Right cardiac atrium (tissue), 5 donors: ENCODE measurements at regions of chr20 and their contacts with region 1.

Region 1: GRCh38 chr20:44388466-44389023 is 33.0 kb downstream of the HNF4A start:
- DNase-seq: peak; percentile 73 to 86 (median 83)
- ATAC-seq: peak; percentile 76 to 88
- H3K4me3 ChIP-seq: no peak overlapping the region
- H3K27ac ChIP-seq: no peak overlapping the region
- H3K4me1 ChIP-seq: no peaks in the 10 kb centered on the region
- H3K27me3 ChIP-seq: no peaks in the 10 kb centered on the region

Region 2: GRCh38 chr20:44210422-44211176 is 177.9 kb before region 1 on chr20 and contains the start of gene OSER1:
- intact Hi-C with region 1: loop called in 3 of 4 experiments (anchors 5 to 10 kb)
- DNase-seq: peak; percentile 95 to 99 (median 98)
- ATAC-seq: peak; percentile 94 to 95
- H3K4me3 ChIP-seq: peak within 1 kb of the TSS; percentile 94
- H3K27ac ChIP-seq: peak within 1 kb of the TSS; percentile 94
- H3K4me1 ChIP-seq: peaks cover 2% of the 10 kb centered on the region
- H3K27me3 ChIP-seq: no peaks in the 10 kb centered on the region
- total RNA-seq, gene OSER1: 22.6 to 44.5 (median 36.1) TPM

Region 3: DNA sequence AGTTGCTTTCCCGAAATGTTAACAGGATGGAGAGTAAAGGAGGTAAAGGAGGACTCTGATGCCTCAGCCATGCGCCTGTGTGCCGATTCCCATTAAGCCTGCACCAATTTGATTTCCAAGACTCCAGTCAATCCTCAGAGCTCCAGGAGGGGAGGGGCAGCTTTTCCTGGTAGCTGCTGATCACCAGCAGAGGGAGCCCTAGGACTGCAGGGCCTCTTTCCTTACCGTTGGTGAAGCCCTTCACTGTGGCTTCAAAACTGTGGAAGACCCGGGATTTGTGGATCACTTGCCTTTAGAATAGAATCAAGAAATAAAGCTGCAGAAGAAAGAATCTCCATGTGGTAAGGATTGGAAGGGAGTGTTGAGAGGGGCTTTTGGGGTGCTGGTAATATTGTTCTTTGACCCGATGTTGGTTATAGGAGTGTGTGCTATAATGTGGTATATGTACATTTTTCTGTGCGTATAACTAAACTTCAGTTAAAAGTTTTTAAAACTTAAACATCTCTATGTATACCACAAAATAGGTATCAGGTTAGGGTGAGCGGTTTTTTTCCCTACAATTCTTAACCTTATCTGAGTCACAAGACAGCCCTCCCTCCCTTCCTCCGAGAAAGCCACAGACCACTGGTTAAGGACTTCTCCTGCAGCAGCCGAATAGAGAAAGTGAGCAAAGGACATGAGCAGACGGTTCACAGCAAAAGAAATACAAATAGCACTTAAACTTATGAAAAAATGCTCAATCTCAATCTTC is 171.0 kb before region 1 on chr20:
- intact Hi-C with region 1: loop called in 3 of 4 experiments (anchors 5 to 10 kb)
- DNase-seq: peak; percentile 59 to 82 (median 77)
- ATAC-seq: peak; percentile 66 to 77
- H3K4me3 ChIP-seq: peak overlapping the region; percentile 40
- H3K27ac ChIP-seq: no peak overlapping the region
- H3K4me1 ChIP-seq: peaks cover 6% of the 10 kb centered on the region
- H3K27me3 ChIP-seq: no peaks in the 10 kb centered on the region

Region 4: GRCh38 chr20:44460795-44461141 is 72.2 kb after region 1 on chr20:
- intact Hi-C with region 1: loop called in 1 of 4 experiments (anchors 10 kb)
- DNase-seq: no peak
- ATAC-seq: no peak
- H3K4me3 ChIP-seq: no peak overlapping the region
- H3K27ac ChIP-seq: no peak overlapping the region
- H3K4me1 ChIP-seq: no peaks in the 10 kb centered on the region
- H3K27me3 ChIP-seq: no peaks in the 10 kb centered on the region

Region 5: GRCh38 chr20:44683263-44684046 is 294.9 kb after region 1 on chr20:
- intact Hi-C with region 1: loop called in 2 of 4 experiments (anchors 5 to 10 kb)
- DNase-seq: peak in 1 of 3 donors; percentile 70
- ATAC-seq: peak; percentile 45 to 71
- H3K4me3 ChIP-seq: no peak overlapping the region
- H3K27ac ChIP-seq: no peak overlapping the region
- H3K4me1 ChIP-seq: no peaks in the 10 kb centered on the region
- H3K27me3 ChIP-seq: no peaks in the 10 kb centered on the region

Region 6: DNA sequence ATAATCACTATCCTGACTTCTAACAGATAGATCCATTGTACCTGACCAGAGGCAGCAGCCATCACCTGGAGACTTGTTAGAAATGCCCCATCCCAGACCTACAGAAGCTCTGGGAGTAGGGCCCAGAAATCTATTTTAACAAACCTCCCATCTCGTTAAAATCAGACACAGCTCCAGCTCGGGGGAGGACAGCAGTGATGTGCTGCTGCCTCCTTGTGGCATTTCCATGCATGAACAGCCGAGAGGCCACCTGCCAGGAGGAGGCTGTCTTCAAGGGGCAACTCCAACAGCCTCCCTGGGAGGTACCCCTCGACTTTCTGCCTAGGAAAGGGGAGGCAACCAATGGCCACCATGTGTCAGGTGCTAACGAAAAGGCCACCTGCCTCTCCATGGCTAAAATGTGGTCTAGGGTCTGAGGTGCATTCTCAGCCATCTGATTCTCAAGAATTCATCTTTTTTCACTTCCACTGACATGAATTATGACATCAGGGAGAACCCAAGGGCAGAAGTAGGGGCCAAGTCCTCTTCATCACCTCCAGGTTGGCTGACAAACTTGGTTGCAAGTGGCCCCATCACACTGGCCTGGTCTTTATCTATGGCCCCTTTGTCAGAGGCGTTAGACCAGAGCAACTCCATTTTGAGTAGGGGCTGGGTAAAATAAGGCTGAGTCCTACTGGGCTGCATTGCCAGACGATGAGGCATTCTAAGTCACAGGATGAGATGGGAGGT is 345.0 kb after region 1 on chr20:
- intact Hi-C with region 1: loop called in 1 of 4 experiments (anchors 10 kb)
- DNase-seq: peak; percentile 72 to 89 (median 86)
- ATAC-seq: peak; percentile 37 to 49
- H3K4me3 ChIP-seq: no peak overlapping the region
- H3K27ac ChIP-seq: peak overlapping the region; percentile 5
- H3K4me1 ChIP-seq: peaks cover 7% of the 10 kb centered on the region
- H3K27me3 ChIP-seq: no peaks in the 10 kb centered on the region